ENCODE measurements at regions of chr2 and their contacts with region 1.

Region 1: DNA sequence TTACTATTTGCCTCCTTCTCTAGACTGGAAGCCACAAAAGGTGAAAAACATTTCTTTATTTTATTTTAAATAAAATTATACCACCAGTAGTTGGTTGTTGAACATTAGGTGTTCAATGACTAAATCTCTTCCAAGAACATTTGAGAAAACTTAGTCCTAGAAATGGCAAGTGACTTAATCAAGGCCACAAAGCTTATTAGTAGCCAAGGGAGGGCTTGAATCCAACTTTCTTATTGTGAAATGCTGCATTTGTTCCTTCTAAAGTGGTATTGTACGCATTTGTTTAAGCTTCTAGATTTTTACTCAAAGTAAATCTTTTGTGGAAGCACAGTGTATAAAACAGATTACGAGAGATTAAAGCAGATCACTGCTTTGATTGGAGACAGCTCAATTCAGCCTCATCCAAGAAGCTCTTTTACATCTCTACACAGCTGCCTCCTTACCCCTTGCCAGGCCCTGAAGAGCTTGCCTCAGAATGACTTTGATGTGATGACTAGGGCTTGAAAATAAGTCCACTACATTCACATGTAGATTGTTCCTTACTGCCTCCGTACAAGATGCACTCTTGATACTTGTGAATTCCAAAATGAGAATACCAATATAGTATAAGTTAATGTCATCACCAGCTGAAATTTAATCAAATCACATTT is 244.8 kb downstream of the XIRP2 start:
- DNase-seq: no peak
- H3K4me3 ChIP-seq: no peak overlapping the region
- H3K27ac ChIP-seq: no peak overlapping the region
- H3K4me1 ChIP-seq: peaks cover 12% of the 10 kb centered on the region
- H3K27me3 ChIP-seq: no peaks in the 10 kb centered on the region
- CTCF ChIP-seq: no peak

Region 2: GRCh38 chr2:166499281-166499680 is 633.8 kb before region 1 on chr2:
- CTCF ChIA-PET with region 1: no interaction called
- POLR2A ChIA-PET with region 1: no interaction called
- intact Hi-C with region 1: no loop called
- DNase-seq: no peak
- H3K4me3 ChIP-seq: no peak overlapping the region
- H3K27ac ChIP-seq: no peak overlapping the region
- H3K4me1 ChIP-seq: no peaks in the 10 kb centered on the region
- H3K27me3 ChIP-seq: no peaks in the 10 kb centered on the region
- CTCF ChIP-seq: no peak

Region 3: DNA sequence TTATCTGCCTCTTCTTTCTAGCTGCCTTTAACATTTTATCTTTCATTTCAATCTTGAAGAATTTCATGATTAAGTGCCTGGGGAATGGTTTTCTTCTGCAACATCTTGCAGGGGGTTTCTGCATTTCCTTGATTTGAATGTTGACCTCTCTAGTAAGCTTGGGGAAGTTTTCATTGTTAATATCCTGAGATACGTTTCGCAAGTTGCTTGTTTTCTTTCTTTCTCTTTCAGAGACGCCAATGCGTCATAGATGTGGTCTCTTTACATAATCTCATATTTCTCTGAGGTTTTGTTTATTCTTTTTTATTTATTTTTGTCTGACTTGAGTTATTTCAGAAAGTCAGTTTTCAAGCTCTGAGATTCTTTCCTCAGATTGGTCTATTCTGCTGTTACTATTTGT is 19.0 kb before region 1 on chr2:
- CTCF ChIA-PET with region 1: no interaction called
- POLR2A ChIA-PET with region 1: interaction called, 14 read pairs
- intact Hi-C with region 1: no loop called
- DNase-seq: peak; percentile 1 to 45
- H3K4me3 ChIP-seq: no peak overlapping the region
- H3K27ac ChIP-seq: peak overlapping the region; percentile 29; the same call in 1 of the 2 replicates
- H3K4me1 ChIP-seq: 0 out of 2 replicates have a peak, but pooled peaks cover 6% of the 10 kb centered on the region
- H3K27me3 ChIP-seq: no peaks in the 10 kb centered on the region
- CTCF ChIP-seq: no peak

Region 4: DNA sequence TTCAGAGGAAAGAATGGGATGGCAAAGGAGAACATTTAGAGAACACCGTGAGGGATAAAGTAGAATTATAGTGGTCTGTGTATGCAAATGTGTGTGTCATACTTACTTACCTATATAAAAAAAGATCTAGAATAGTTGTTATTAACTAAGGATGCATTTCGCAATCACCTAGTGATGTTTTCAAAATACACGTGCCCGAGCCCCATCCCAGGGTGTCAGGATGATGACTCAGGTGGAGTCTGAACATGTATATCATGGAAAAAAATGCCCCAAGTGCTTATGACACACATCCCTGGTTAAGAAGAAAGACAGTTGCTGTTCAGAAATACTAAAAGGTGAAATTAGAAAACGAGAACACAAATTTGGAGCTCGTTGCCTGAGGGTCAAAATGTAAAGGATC is 1432.1 kb after region 1 on chr2:
- CTCF ChIA-PET with region 1: no interaction called
- POLR2A ChIA-PET with region 1: no interaction called
- intact Hi-C with region 1: no loop called
- DNase-seq: no peak
- H3K4me3 ChIP-seq: no peak overlapping the region
- H3K27ac ChIP-seq: no peak overlapping the region
- H3K4me1 ChIP-seq: no peaks in the 10 kb centered on the region
- H3K27me3 ChIP-seq: no peaks in the 10 kb centered on the region
- CTCF ChIP-seq: no peak